K562 (cell line): ENCODE measurements at regions of chr1 and their contacts with region 1.

Region 1: DNA sequence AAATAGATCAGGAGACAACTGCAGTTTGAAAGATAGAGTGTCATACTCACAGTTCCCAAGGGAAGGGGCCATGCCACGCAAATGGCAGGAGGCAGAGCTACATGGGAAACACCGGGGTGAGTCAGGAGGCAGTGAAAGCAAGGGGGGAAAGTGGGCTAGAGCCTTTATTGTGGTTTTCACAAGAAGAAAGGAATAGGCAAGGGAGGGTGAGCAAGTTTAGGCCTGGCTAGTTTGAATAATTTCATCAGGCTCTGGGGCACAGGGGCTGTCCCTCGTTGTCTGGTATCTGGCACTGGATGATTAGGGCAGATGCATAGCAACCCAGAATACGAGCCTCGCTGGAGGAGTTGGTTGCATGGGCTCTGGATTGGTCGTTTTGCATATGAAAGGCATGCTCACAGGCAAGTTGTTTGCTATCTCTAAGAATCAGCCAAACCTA is 17.0 kb upstream of the ITLN2 start:
- DNase-seq: no peak
- ATAC-seq: no peak
- H3K4me3 ChIP-seq: no peak overlapping the region
- H3K27ac ChIP-seq: no peak overlapping the region
- H3K4me1 ChIP-seq: no peaks in the 10 kb centered on the region
- H3K27me3 ChIP-seq: peaks cover 32 to 49% of the 10 kb centered on the region in 2 experiments
- CTCF ChIP-seq: no peak
- EP300 ChIP-seq: no peak
- POLR2A ChIP-seq: no peak
- RAD21 ChIP-seq: no peak

Region 2: GRCh38 chr1:160325252-160325651 is 646.4 kb before region 1 on chr1:
- CTCF ChIA-PET with region 1: no interaction called
- POLR2A ChIA-PET with region 1: no interaction called
- in situ Hi-C with region 1: no loop called
- intact Hi-C with region 1: no loop called
- DNase-seq: no peak
- ATAC-seq: no peak
- H3K4me3 ChIP-seq: no peak overlapping the region
- H3K27ac ChIP-seq: no peak overlapping the region
- H3K4me1 ChIP-seq: no peaks in the 10 kb centered on the region; a peak in 1 of 5 replicates
- H3K27me3 ChIP-seq: no peaks in the 10 kb centered on the region
- CTCF ChIP-seq: no peak
- EP300 ChIP-seq: no peak
- POLR2A ChIP-seq: no peak
- RAD21 ChIP-seq: no peak

Region 3: GRCh38 chr1:160681067-160681890 is 290.4 kb before region 1 on chr1:
- CTCF ChIA-PET with region 1: no interaction called
- POLR2A ChIA-PET with region 1: no interaction called
- in situ Hi-C with region 1: no loop called
- intact Hi-C with region 1: no loop called
- DNase-seq: peak; percentile 75 to 92 (median 80)
- ATAC-seq: peak; percentile 100
- H3K4me3 ChIP-seq: no peak overlapping the region
- H3K27ac ChIP-seq: no peak overlapping the region
- H3K4me1 ChIP-seq: peaks cover 0 to 3% of the 10 kb centered on the region in 2 experiments; a peak in 3 of 5 replicates
- H3K27me3 ChIP-seq: no peaks in the 10 kb centered on the region; a peak in 1 of 5 replicates
- CTCF ChIP-seq: peak; percentile 99
- EP300 ChIP-seq: no peak; the same call in 1 of the 2 replicates
- POLR2A ChIP-seq: no peak
- RAD21 ChIP-seq: peak; percentile 91 to 97

Region 4: GRCh38 chr1:160985723-160986122 is 14.1 kb after region 1 on chr1:
- CTCF ChIA-PET with region 1: interaction called, 10 read pairs
- POLR2A ChIA-PET with region 1: interaction called, 3 read pairs
- in situ Hi-C with region 1: no loop called
- intact Hi-C with region 1: no loop called
- DNase-seq: no peak
- ATAC-seq: no peak
- H3K4me3 ChIP-seq: no peak overlapping the region
- H3K27ac ChIP-seq: no peak overlapping the region
- H3K4me1 ChIP-seq: peaks cover 4 to 7% of the 10 kb centered on the region in 2 experiments; a peak in 4 of 5 replicates
- H3K27me3 ChIP-seq: peaks cover 0 to 8% of the 10 kb centered on the region in 2 experiments; a peak in 2 of 5 replicates
- CTCF ChIP-seq: no peak
- EP300 ChIP-seq: no peak
- POLR2A ChIP-seq: no peak
- RAD21 ChIP-seq: no peak